ENCODE measurements at regions of chr13 and their contacts with region 1.

Region 1: GRCh38 chr13:107961849-107962248 is 253.5 kb downstream of the LIG4 start:
- DNase-seq: no peak
- H3K4me3 ChIP-seq: no peak overlapping the region
- H3K4me3 Mint-ChIP-seq: peak overlapping the region; percentile 7
- H3K27ac Mint-ChIP-seq: no peak overlapping the region
- H3K4me1 ChIP-seq: peaks cover 13% of the 10 kb centered on the region
- H3K4me1 Mint-ChIP-seq: peaks cover 8% of the 10 kb centered on the region
- H3K27me3 ChIP-seq: no peaks in the 10 kb centered on the region
- H3K27me3 Mint-ChIP-seq: no peaks in the 10 kb centered on the region
- CTCF ChIP-seq: no peak

Region 2: GRCh38 chr13:107941345-107942029 is 20.4 kb before region 1 on chr13:
- CTCF ChIA-PET with region 1: no interaction called
- POLR2A ChIA-PET with region 1: no interaction called
- intact Hi-C with region 1: loop called (anchors 2 kb)
- DNase-seq: peak in 1 of 2 experiments; percentile 19
- H3K4me3 ChIP-seq: no peak overlapping the region
- H3K4me3 Mint-ChIP-seq: no peak overlapping the region
- H3K27ac Mint-ChIP-seq: no peak overlapping the region
- H3K4me1 ChIP-seq: peaks cover 7% of the 10 kb centered on the region; the same call in 1 of the 2 replicates
- H3K4me1 Mint-ChIP-seq: no peaks in the 10 kb centered on the region
- H3K27me3 ChIP-seq: no peaks in the 10 kb centered on the region
- H3K27me3 Mint-ChIP-seq: no peaks in the 10 kb centered on the region
- CTCF ChIP-seq: no peak

Region 3: GRCh38 chr13:107977071-107977574 is 15.3 kb after region 1 on chr13:
- CTCF ChIA-PET with region 1: no interaction called
- POLR2A ChIA-PET with region 1: no interaction called
- intact Hi-C with region 1: no loop called
- DNase-seq: no peak
- H3K4me3 ChIP-seq: no peak overlapping the region
- H3K4me3 Mint-ChIP-seq: no peak overlapping the region
- H3K27ac Mint-ChIP-seq: no peak overlapping the region
- H3K4me1 ChIP-seq: no peaks in the 10 kb centered on the region
- H3K4me1 Mint-ChIP-seq: no peaks in the 10 kb centered on the region
- H3K27me3 ChIP-seq: no peaks in the 10 kb centered on the region
- H3K27me3 Mint-ChIP-seq: peaks cover 4% of the 10 kb centered on the region
- CTCF ChIP-seq: no peak

Region 4: GRCh38 chr13:108215436-108215835 is 253.6 kb after region 1 on chr13 and contains the start of gene LIG4:
- CTCF ChIA-PET with region 1: no interaction called
- POLR2A ChIA-PET with region 1: no interaction called
- intact Hi-C with region 1: no loop called
- DNase-seq: peak; percentile 93 to 94
- H3K4me3 ChIP-seq: peak within 1 kb of the TSS; percentile 71
- H3K4me3 Mint-ChIP-seq: peak within 1 kb of the TSS; percentile 73
- H3K27ac Mint-ChIP-seq: peak within 1 kb of the TSS; percentile 16
- H3K4me1 ChIP-seq: peaks cover 15% of the 10 kb centered on the region
- H3K4me1 Mint-ChIP-seq: peaks cover 7% of the 10 kb centered on the region
- H3K27me3 ChIP-seq: no peaks in the 10 kb centered on the region
- H3K27me3 Mint-ChIP-seq: no peaks in the 10 kb centered on the region
- CTCF ChIP-seq: no peak
- total RNA-seq, gene LIG4: 9.0 and 9.6 TPM in 2 replicates

Measured in Caco-2 (cell line).